ENCODE measurements at regions of chr2 and their contacts with region 1.

Region 1: GRCh38 chr2:240513549-240514287 is 44.1 kb downstream of the ANKMY1 start:
- DNase-seq: peak; percentile 85
- ATAC-seq: peak; percentile 99
- H3K4me3 ChIP-seq: no peak overlapping the region
- H3K4me3 Mint-ChIP-seq: peak overlapping the region; percentile 56
- H3K27ac ChIP-seq: peak overlapping the region; percentile 55 to 59
- H3K27ac Mint-ChIP-seq: peak overlapping the region; percentile 78
- H3K4me1 ChIP-seq: peaks cover 12 to 14% of the 10 kb centered on the region in 2 donors
- H3K4me1 Mint-ChIP-seq: peaks cover 10% of the 10 kb centered on the region
- H3K27me3 ChIP-seq: no peaks in the 10 kb centered on the region
- H3K27me3 Mint-ChIP-seq: no peaks in the 10 kb centered on the region
- CTCF ChIP-seq: peak; percentile 86

Region 2: GRCh38 chr2:240566203-240567136 is 52.8 kb after region 1 on chr2:
- CTCF ChIA-PET with region 1: interaction called, 25 read pairs
- POLR2A ChIA-PET with region 1: interaction called, 7 read pairs
- intact Hi-C with region 1: loop called (anchors 1 kb)
- DNase-seq: peak; percentile 93
- ATAC-seq: peak; percentile 64
- H3K4me3 ChIP-seq: peak overlapping the region; percentile 26 to 76 (median 51)
- H3K4me3 Mint-ChIP-seq: peak overlapping the region; percentile 94
- H3K27ac ChIP-seq: peak overlapping the region; percentile 84 to 86
- H3K27ac Mint-ChIP-seq: peak overlapping the region; percentile 99
- H3K4me1 ChIP-seq: peaks cover 64 to 75% of the 10 kb centered on the region in 2 donors
- H3K4me1 Mint-ChIP-seq: peaks cover 78% of the 10 kb centered on the region
- H3K27me3 ChIP-seq: no peaks in the 10 kb centered on the region
- H3K27me3 Mint-ChIP-seq: no peaks in the 10 kb centered on the region
- CTCF ChIP-seq: peak; percentile 93

Region 3: GRCh38 chr2:240579771-240580614 is 66.3 kb after region 1 on chr2:
- CTCF ChIA-PET with region 1: interaction called, 11 read pairs
- POLR2A ChIA-PET with region 1: no interaction called
- intact Hi-C with region 1: no loop called
- DNase-seq: peak; percentile 63
- ATAC-seq: peak; percentile 21
- H3K4me3 ChIP-seq: no peak overlapping the region
- H3K4me3 Mint-ChIP-seq: no peak overlapping the region
- H3K27ac ChIP-seq: no peak overlapping the region
- H3K27ac Mint-ChIP-seq: peak overlapping the region; percentile 70
- H3K4me1 ChIP-seq: peaks cover 9 to 27% of the 10 kb centered on the region in 2 donors
- H3K4me1 Mint-ChIP-seq: peaks cover 40% of the 10 kb centered on the region
- H3K27me3 ChIP-seq: no peaks in the 10 kb centered on the region
- H3K27me3 Mint-ChIP-seq: no peaks in the 10 kb centered on the region
- CTCF ChIP-seq: peak; percentile 13

Region 4: GRCh38 chr2:240586198-240586918 is 72.6 kb after region 1 on chr2 and contains the start of gene CAPN10:
- CTCF ChIA-PET with region 1: interaction called, 25 read pairs
- POLR2A ChIA-PET with region 1: interaction called, 6 read pairs
- intact Hi-C with region 1: loop called (anchors 1 kb)
- DNase-seq: peak; percentile 97
- ATAC-seq: peak; percentile 77
- H3K4me3 ChIP-seq: peak within 1 kb of the TSS; percentile 62 to 93 (median 89)
- H3K4me3 Mint-ChIP-seq: peak within 1 kb of the TSS; percentile 93
- H3K27ac ChIP-seq: peak within 1 kb of the TSS; percentile 95 to 97
- H3K27ac Mint-ChIP-seq: peak within 1 kb of the TSS; percentile 94
- H3K4me1 ChIP-seq: peaks cover 32 to 40% of the 10 kb centered on the region in 2 donors
- H3K4me1 Mint-ChIP-seq: peaks cover 54% of the 10 kb centered on the region
- H3K27me3 ChIP-seq: no peaks in the 10 kb centered on the region
- H3K27me3 Mint-ChIP-seq: no peaks in the 10 kb centered on the region
- CTCF ChIP-seq: no peak
- total RNA-seq, gene CAPN10: 73.4 and 88.9 TPM in 2 replicates

Region 5: DNA sequence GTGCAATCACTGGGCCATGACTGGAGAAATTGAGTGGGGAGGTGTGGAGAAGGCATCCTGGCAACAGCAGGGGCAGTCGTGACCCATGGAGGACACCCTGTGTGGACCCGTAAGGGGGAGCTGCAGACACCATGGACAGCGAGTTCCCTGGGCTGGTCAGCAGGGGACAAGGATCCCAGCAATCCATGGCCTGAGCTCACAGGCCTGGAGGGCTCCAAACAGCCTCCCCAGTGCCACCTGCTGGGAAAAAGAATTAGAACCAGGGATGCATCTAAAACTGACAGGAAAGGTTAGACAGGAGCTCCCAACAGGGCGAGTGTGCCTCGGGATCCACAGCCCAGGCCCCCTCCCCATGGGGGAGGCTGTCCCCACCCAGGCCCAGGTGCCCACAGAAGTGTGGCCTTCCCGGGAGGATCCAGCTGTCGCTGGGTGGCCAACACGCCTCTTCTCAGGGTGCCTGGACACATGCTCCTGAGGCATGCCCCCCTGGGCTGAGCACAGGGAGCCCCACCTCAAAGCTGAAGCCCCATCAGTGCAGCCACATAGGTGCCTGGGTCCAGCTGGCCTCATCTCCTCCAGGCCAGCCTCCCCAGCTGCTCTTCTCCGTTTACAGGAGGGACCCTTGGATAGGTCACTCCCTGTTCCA is 326.8 kb after region 1 on chr2:
- CTCF ChIA-PET with region 1: interaction called, 17 read pairs
- POLR2A ChIA-PET with region 1: no interaction called
- intact Hi-C with region 1: no loop called
- DNase-seq: no peak
- ATAC-seq: no peak
- H3K4me3 ChIP-seq: no peak overlapping the region
- H3K4me3 Mint-ChIP-seq: no peak overlapping the region
- H3K27ac ChIP-seq: no peak overlapping the region
- H3K27ac Mint-ChIP-seq: no peak overlapping the region
- H3K4me1 ChIP-seq: no peaks in the 10 kb centered on the region
- H3K4me1 Mint-ChIP-seq: no peaks in the 10 kb centered on the region
- H3K27me3 ChIP-seq: peaks cover 0 to 21% (median 6%) of the 10 kb centered on the region in 4 experiments
- H3K27me3 Mint-ChIP-seq: peaks cover 28% of the 10 kb centered on the region
- CTCF ChIP-seq: no peak

Region 6: DNA sequence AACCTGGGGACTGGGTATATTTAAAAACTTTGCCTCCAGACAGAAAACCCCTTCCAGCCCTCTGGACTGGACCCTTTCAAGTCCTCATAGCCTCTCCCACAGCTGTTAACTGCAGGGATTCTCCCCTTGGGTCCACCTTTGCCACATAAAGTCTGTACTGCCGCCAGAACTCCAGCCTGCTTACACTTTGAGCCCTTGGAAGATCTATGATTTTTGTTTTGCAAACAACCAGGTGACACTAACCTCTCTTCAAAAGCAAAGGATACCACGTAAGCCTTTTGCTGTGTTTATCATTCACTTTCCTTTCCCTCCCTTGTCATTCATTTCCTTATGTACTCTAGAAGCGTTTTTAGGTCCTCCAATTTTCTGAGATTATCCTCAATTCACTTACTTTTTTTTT is 350.8 kb after region 1 on chr2:
- CTCF ChIA-PET with region 1: no interaction called
- POLR2A ChIA-PET with region 1: interaction called, 10 read pairs
- intact Hi-C with region 1: no loop called
- DNase-seq: no peak
- ATAC-seq: no peak
- H3K4me3 ChIP-seq: no peak overlapping the region
- H3K4me3 Mint-ChIP-seq: no peak overlapping the region
- H3K27ac ChIP-seq: no peak overlapping the region
- H3K27ac Mint-ChIP-seq: no peak overlapping the region
- H3K4me1 ChIP-seq: no peaks in the 10 kb centered on the region
- H3K4me1 Mint-ChIP-seq: no peaks in the 10 kb centered on the region
- H3K27me3 ChIP-seq: no peaks in the 10 kb centered on the region
- H3K27me3 Mint-ChIP-seq: peaks cover 33% of the 10 kb centered on the region
- CTCF ChIP-seq: no peak

Region 7: GRCh38 chr2:240913810-240914644 is 400.3 kb after region 1 on chr2:
- CTCF ChIA-PET with region 1: interaction called, 10 read pairs
- POLR2A ChIA-PET with region 1: no interaction called
- intact Hi-C with region 1: no loop called
- DNase-seq: peak; percentile 69
- ATAC-seq: peak; percentile 69
- H3K4me3 ChIP-seq: no peak overlapping the region
- H3K4me3 Mint-ChIP-seq: no peak overlapping the region
- H3K27ac ChIP-seq: no peak overlapping the region
- H3K27ac Mint-ChIP-seq: no peak overlapping the region
- H3K4me1 ChIP-seq: peaks cover 8 to 15% of the 10 kb centered on the region in 2 donors
- H3K4me1 Mint-ChIP-seq: peaks cover 10% of the 10 kb centered on the region
- H3K27me3 ChIP-seq: peaks cover 0 to 31% (median 9%) of the 10 kb centered on the region in 4 experiments
- H3K27me3 Mint-ChIP-seq: peaks cover 30% of the 10 kb centered on the region
- CTCF ChIP-seq: peak; percentile 88